Activated T-helper 1 cell treated with anti-CD3 and anti-CD28 coated beads, Interleukin-12 subunit alpha, Interleukin-12 subunit beta, Interleukin-2, Interleukin-4 antibody, amounts not matched to agents 30 ng/mL and 10 ng/mL and 1 ng/mL, durations not matched to agents 14 hours and 24 hours and 36 hours (primary cell): ENCODE measurements at regions of chr16 and their contacts with region 1.

Region 1: DNA sequence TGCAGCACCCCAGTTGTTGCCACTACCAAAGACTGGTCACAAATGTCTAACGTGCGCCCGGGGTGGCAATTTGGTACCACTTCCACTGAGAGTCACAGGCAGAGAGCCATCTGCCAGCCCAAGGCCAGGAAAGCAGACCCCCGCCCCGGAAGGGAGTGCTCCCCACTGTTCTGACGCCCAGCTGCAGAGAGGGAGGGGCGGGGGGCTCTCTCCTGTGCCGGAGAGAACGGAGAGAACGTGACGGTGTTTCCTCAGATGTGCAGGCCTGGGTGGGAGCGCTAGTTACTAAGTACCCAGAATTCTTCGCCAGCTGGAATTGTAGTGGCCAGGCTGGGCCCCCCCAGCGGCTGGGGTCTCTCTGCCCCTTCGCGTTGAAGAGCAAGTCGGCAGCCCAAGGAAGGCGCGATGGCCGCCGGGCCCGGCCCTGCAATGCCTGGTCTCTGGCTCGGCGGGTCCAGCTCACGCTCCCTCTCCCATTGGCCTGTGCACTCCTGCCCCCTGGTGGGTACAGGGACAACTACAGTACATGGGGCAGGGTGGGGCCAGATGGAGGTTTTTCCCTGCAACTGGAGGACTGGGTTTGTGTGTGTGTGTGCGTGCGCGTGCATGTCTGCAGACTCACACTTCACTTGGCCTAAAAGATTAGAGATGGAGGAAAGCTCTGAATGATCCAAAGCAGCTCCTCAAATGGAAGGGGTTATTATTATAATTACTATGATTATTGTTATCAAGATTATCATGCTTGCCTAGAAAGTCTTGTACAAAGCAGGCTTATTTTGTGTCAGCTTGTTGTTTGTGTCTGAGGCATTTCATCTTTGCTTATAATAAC is 107.1 kb downstream of the AMFR start:
- DNase-seq: peak; percentile 62
- H3K4me3 Mint-ChIP-seq: no peak overlapping the region
- H3K27ac Mint-ChIP-seq: no peak overlapping the region
- H3K4me1 Mint-ChIP-seq: no peaks in the 10 kb centered on the region
- H3K27me3 Mint-ChIP-seq: peaks cover 11% of the 10 kb centered on the region

Region 2: GRCh38 chr16:55465077-55465896 is 852.9 kb before region 1 on chr16:
- intact Hi-C with region 1: loop called (anchors 10 kb)
- DNase-seq: peak; percentile 72
- H3K4me3 Mint-ChIP-seq: no peak overlapping the region
- H3K27ac Mint-ChIP-seq: no peak overlapping the region
- H3K4me1 Mint-ChIP-seq: peaks cover 6% of the 10 kb centered on the region
- H3K27me3 Mint-ChIP-seq: no peaks in the 10 kb centered on the region

Region 3: DNA sequence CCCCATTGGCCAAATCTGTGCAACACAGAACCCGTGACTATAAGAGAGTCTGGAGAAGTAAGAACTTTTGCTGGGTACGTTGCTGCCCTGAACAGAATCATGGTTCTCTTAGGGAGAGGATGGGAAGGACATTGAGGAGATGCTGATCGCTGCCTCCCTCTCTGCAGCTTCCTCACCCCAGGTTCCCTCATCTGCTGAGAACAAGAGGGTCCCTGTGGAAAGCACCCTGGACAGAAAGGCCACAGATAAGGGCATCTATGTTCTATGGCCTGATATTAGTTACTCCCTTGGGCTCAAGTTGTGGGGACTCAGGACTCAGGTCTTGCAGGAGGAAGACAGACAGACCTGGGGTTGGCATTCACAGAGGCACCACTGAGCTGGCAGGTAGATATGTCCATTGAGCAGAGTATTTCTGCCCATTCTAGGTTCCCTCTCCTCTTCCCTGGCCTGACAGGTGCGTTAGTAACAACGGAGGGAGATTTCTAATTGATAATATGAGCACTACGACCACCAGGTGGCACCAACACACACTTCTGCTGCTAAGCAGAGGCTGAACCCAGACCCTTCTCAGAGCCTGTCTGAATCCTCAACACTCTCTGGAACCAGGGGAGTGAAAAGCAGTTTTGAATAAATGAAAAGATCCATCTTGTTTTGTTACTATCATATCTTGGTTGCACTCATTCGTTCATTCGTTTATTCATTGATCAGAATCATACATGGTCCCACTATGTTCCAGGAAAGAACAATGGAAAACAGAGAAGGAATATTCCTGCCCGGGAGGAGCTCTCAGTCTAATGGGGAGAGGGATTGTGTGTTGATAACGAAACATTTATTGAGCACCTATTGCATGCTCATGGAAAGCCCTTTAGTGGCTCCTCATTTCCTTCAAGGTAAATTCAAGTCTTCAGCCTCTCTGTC is 606.0 kb before region 1 on chr16:
- intact Hi-C with region 1: loop called (anchors 1 kb)
- DNase-seq: peak; percentile 26
- H3K4me3 Mint-ChIP-seq: no peak overlapping the region
- H3K27ac Mint-ChIP-seq: no peak overlapping the region
- H3K4me1 Mint-ChIP-seq: no peaks in the 10 kb centered on the region
- H3K27me3 Mint-ChIP-seq: peaks cover 2% of the 10 kb centered on the region

Region 4: DNA sequence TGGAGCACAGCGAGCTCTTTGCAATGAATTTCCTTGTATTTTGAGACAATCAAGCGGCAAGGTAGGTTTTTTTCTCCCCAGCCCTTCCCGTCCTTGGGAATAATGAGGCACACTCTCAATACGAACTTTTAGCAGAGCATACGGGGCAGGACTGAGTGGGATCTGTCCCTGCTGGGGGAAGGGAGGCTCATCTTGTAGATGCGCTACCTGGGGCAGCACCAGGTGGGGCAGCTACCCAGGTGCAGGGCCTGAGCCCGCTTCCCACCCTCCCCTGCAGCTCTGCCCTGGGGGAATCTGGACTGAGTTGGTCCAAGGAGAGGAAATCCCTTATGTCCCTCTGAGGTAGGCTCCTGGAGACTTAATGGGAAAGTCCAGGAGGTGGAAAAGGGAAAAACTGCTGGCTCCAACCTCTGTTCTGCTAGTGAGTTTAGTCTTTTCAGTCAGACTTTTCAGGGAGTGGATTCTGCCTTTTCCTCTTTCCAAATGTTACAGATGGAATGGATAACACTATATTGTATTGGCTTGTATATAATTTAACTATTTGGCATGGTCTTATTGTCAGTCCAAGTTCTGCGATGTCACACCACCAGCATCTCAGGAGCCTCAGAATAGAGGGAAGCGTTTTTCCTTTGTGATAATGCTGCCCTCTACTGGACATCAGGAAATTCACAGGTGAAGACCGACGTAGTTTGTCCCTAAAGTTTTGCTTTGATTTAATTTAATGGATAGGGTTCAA is 475.7 kb before region 1 on chr16:
- intact Hi-C with region 1: loop called (anchors 5 kb)
- DNase-seq: no peak
- H3K4me3 Mint-ChIP-seq: no peak overlapping the region
- H3K27ac Mint-ChIP-seq: no peak overlapping the region
- H3K4me1 Mint-ChIP-seq: no peaks in the 10 kb centered on the region
- H3K27me3 Mint-ChIP-seq: peaks cover 7% of the 10 kb centered on the region

Region 5: GRCh38 chr16:55944377-55944802 is 373.8 kb before region 1 on chr16:
- intact Hi-C with region 1: loop called (anchors 1 kb)
- DNase-seq: peak; percentile 2
- H3K4me3 Mint-ChIP-seq: no peak overlapping the region
- H3K27ac Mint-ChIP-seq: no peak overlapping the region
- H3K4me1 Mint-ChIP-seq: no peaks in the 10 kb centered on the region
- H3K27me3 Mint-ChIP-seq: peaks cover 21% of the 10 kb centered on the region

Region 6: DNA sequence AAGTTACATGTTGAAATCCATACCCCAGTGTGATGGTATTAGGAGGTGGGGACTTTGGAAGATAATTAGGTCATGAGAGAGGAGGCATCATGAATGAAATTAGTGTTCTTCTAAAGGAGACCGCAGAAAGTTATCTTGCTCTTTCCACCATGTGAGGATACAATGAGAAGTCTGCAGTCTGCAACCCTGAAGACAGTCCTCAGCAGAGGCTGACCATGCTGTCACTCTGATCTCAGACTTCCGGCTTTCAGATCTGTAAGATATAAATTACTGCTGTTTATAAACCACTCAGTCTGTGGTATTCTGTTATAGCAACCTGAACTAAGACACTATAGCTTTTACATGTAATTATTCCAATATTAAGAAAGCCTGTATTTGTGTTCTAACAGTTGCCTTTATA is 326.4 kb before region 1 on chr16:
- intact Hi-C with region 1: no loop called
- DNase-seq: no peak
- H3K4me3 Mint-ChIP-seq: no peak overlapping the region
- H3K27ac Mint-ChIP-seq: no peak overlapping the region
- H3K4me1 Mint-ChIP-seq: no peaks in the 10 kb centered on the region
- H3K27me3 Mint-ChIP-seq: no peaks in the 10 kb centered on the region

Region 7: DNA sequence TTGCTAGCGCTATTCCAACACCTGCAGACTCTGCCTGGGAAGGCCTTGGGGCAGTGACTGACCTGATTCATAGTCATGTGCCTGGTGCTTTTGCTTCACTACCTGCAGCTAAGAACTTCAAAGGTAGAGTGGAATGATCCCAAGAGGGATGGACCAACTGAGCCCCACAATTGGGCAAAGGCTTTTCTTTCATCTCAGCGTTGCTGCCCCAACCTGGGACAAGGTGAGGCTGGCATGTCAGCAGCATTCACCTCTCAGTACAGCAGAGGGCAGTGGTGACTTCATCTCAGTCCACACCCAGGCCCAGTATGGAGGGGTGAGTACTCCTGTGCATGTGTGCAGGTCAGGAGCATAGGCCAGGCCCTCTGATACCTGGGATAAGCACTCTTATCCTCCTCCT is 276.5 kb before region 1 on chr16:
- intact Hi-C with region 1: loop called (anchors 1 kb)
- DNase-seq: peak; percentile 2
- H3K4me3 Mint-ChIP-seq: no peak overlapping the region
- H3K27ac Mint-ChIP-seq: no peak overlapping the region
- H3K4me1 Mint-ChIP-seq: no peaks in the 10 kb centered on the region
- H3K27me3 Mint-ChIP-seq: peaks cover 5% of the 10 kb centered on the region

Region 8: DNA sequence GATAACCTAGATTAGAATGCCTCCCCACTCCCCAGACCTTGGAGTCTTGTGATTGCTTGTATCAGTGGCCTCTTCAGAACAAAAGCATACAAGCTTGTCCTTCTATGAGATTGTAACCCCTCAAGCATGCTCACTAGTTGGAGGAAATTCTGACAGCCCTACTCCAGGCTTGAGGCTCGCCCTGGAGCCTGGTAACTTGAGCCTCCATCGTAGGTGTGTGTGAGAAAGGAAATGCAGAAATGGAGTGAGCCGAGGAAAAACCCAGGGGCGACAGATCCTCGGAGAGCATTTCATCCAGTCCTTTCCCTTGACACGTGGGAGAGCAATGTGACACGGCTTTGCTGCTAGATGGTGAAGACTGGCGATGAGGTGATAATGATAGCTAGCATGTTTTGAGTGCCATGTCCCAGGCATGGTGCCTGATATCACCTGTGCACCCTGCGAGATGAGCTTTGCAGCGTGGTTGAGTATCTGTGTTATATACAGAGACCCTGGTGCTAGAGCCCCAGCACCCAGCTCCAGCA is 95.7 kb before region 1 on chr16:
- intact Hi-C with region 1: no loop called
- DNase-seq: no peak
- H3K4me3 Mint-ChIP-seq: no peak overlapping the region
- H3K27ac Mint-ChIP-seq: no peak overlapping the region
- H3K4me1 Mint-ChIP-seq: peaks cover 26% of the 10 kb centered on the region
- H3K27me3 Mint-ChIP-seq: peaks cover 27% of the 10 kb centered on the region

Region 9: GRCh38 chr16:56348158-56349085 is 30.2 kb after region 1 on chr16:
- intact Hi-C with region 1: no loop called
- DNase-seq: no peak
- H3K4me3 Mint-ChIP-seq: no peak overlapping the region
- H3K27ac Mint-ChIP-seq: no peak overlapping the region
- H3K4me1 Mint-ChIP-seq: no peaks in the 10 kb centered on the region
- H3K27me3 Mint-ChIP-seq: peaks cover 4% of the 10 kb centered on the region